ENCODE measurements at regions of chr13 and their contacts with region 1.

Region 1: GRCh38 chr13:70613295-70613694 is 505.0 kb upstream of the KLHL1 start:
- DNase-seq: peak; percentile 8
- H3K4me3 Mint-ChIP-seq: no peak overlapping the region
- H3K27ac Mint-ChIP-seq: no peak overlapping the region
- H3K4me1 Mint-ChIP-seq: no peaks in the 10 kb centered on the region
- H3K27me3 Mint-ChIP-seq: peaks cover 79% of the 10 kb centered on the region
- CTCF ChIP-seq: peak; percentile 16

Region 2: DNA sequence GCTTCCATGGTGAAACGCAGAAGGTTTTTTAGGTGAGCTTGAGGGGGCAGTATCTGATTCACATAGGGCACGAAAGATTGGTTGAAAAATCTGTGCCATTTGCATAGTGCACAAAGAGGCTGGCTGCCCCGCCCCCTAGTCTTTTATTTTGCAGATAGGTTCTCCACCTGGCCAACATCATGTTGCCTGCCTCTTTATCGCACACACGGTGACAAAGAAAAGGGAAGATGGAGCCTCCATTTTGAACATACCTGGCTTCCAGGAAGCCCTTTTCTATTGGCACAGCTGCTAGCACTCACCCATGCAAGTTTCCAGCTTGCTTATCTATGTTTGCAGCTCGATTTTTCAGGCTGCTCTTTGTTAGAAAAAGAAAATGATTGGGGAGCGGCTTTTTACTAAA is 188.9 kb before region 1 on chr13:
- CTCF ChIA-PET with region 1: no interaction called
- POLR2A ChIA-PET with region 1: no interaction called
- intact Hi-C with region 1: no loop called
- DNase-seq: no peak
- H3K4me3 Mint-ChIP-seq: no peak overlapping the region
- H3K27ac Mint-ChIP-seq: no peak overlapping the region
- H3K4me1 Mint-ChIP-seq: no peaks in the 10 kb centered on the region
- H3K27me3 Mint-ChIP-seq: peaks cover 39% of the 10 kb centered on the region
- CTCF ChIP-seq: no peak

Region 3: DNA sequence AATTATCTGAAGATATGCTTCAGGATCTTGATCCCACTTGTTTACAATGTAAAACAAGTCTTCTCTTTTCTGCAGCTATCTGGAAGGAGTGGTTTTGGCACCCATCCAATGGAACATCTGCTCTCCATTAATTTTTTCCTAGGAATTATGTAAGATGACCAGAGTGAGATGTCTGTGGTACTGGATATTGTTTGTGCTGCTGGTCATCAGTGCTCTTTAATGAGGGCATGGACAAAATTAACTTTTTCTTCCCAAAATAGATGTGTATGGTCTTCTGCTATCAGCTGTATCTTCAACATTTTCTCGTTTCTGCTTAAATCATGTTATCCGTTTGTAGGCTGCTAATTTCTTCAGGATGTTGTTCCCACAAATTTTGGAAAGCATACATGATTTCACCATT is 89.7 kb before region 1 on chr13:
- CTCF ChIA-PET with region 1: no interaction called
- POLR2A ChIA-PET with region 1: no interaction called
- intact Hi-C with region 1: no loop called
- DNase-seq: no peak
- H3K4me3 Mint-ChIP-seq: no peak overlapping the region
- H3K27ac Mint-ChIP-seq: no peak overlapping the region
- H3K4me1 Mint-ChIP-seq: no peaks in the 10 kb centered on the region
- H3K27me3 Mint-ChIP-seq: peaks cover 64% of the 10 kb centered on the region
- CTCF ChIP-seq: no peak

Region 4: GRCh38 chr13:70662231-70662940 is 49.1 kb after region 1 on chr13:
- CTCF ChIA-PET with region 1: no interaction called
- POLR2A ChIA-PET with region 1: no interaction called
- intact Hi-C with region 1: no loop called
- DNase-seq: no peak
- H3K4me3 Mint-ChIP-seq: no peak overlapping the region
- H3K27ac Mint-ChIP-seq: no peak overlapping the region
- H3K4me1 Mint-ChIP-seq: no peaks in the 10 kb centered on the region
- H3K27me3 Mint-ChIP-seq: peaks cover 44% of the 10 kb centered on the region
- CTCF ChIP-seq: no peak

Region 5: DNA sequence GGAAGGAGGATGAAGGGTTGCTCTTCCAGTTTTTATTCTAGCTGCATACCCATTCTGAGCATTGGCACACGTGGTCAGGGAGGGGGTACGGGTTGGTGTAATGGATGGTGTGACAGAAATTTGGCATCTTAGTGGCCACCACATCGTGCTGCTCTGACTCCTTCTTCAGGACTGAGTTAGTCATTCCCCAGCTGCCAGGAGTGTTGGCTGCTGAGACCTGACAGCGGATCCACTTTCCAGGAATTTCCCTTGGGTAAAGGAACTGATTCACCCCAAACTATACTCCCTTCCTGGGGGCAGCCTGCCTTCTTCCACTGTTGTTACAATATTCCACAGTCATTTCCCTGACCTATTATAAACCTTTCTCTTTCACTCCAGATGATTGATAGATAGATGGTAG is 90.5 kb after region 1 on chr13:
- CTCF ChIA-PET with region 1: no interaction called
- POLR2A ChIA-PET with region 1: no interaction called
- intact Hi-C with region 1: no loop called
- DNase-seq: no peak
- H3K4me3 Mint-ChIP-seq: no peak overlapping the region
- H3K27ac Mint-ChIP-seq: no peak overlapping the region
- H3K4me1 Mint-ChIP-seq: no peaks in the 10 kb centered on the region
- H3K27me3 Mint-ChIP-seq: peaks cover 66% of the 10 kb centered on the region
- CTCF ChIP-seq: no peak

Region 6: DNA sequence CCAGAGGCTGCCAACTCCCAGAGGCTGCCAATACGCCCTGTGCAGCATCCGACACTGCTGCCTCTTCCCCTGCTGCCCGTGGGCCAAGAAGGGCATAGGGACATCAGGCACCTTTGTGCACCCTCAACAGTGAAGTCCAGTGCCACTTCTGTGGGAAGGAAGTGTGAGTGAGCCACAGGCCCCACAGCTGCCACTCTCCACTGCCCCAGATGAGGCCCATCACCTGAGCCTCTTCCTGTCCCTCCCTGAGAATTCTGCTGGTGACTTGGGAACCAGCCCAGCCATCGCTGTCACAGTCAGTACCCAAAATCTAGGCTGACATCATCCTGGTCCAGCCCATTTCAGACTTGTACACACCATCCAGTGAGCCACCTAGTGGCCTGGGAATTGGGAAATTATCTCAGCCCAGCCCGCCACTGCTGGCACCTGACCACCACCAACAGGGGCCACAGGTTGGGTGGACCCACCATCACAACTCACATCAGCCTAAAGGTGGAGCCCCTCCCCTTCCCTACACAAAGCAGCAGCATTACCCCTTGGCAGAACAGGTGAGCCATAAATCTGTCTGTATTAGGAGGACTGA is 228.9 kb after region 1 on chr13:
- CTCF ChIA-PET with region 1: no interaction called
- POLR2A ChIA-PET with region 1: no interaction called
- intact Hi-C with region 1: loop called (anchors 10 kb)
- DNase-seq: peak; percentile 7
- H3K4me3 Mint-ChIP-seq: no peak overlapping the region
- H3K27ac Mint-ChIP-seq: no peak overlapping the region
- H3K4me1 Mint-ChIP-seq: no peaks in the 10 kb centered on the region
- H3K27me3 Mint-ChIP-seq: peaks cover 41% of the 10 kb centered on the region
- CTCF ChIP-seq: no peak

Measured in MCF 10A (cell line).